ENCODE measurements at regions of chr3 and their contacts with region 1.

Region 1: GRCh38 chr3:5057857-5058324 is 64.2 kb upstream of the ARL8B start:
- DNase-seq: peak; percentile 60
- ATAC-seq: peak; percentile 94
- H3K4me3 ChIP-seq: no peak overlapping the region
- H3K27ac ChIP-seq: no peak overlapping the region
- H3K4me1 ChIP-seq: peaks cover 6% of the 10 kb centered on the region; the same call in 1 of the 2 replicates
- H3K27me3 ChIP-seq: peaks cover 0 to 22% of the 10 kb centered on the region in 2 experiments; a peak in 2 of 5 replicates
- CTCF ChIP-seq: peak; percentile 81
- EP300 ChIP-seq: no peak
- POLR2A ChIP-seq: no peak
- RAD21 ChIP-seq: peak; percentile 77

Region 2: GRCh38 chr3:4656059-4656458 is 401.8 kb before region 1 on chr3:
- CTCF ChIA-PET with region 1: interaction called, 6 read pairs
- POLR2A ChIA-PET with region 1: no interaction called
- in situ Hi-C with region 1: no loop called
- intact Hi-C with region 1: loop called (anchors 1 kb)
- DNase-seq: peak; percentile 30
- ATAC-seq: peak; percentile 97
- H3K4me3 ChIP-seq: no peak overlapping the region
- H3K27ac ChIP-seq: no peak overlapping the region
- H3K4me1 ChIP-seq: no peaks in the 10 kb centered on the region
- H3K27me3 ChIP-seq: no peaks in the 10 kb centered on the region
- CTCF ChIP-seq: peak; percentile 70
- EP300 ChIP-seq: no peak
- POLR2A ChIP-seq: no peak
- RAD21 ChIP-seq: peak; percentile 54

Region 3: DNA sequence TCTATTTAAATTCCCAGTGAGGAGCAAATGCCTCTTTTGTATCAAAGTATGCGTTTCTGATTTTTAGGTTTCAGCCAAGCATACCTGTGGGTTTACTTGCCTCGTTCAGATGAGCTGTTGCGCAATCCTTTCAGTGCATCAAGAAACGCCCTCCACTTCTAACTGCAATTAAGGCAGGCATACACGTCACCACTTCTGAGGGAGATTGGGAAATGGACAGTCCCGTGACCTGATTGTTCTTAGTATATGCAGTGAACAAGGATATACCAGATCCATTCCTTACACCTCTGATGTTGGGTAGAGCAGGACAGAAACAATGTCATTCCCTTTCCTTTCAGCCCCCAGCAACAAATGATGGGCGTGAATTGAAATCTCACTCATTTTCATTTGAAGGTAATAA is 345.7 kb before region 1 on chr3:
- CTCF ChIA-PET with region 1: interaction called, 50 read pairs
- POLR2A ChIA-PET with region 1: no interaction called
- in situ Hi-C with region 1: no loop called
- intact Hi-C with region 1: loop called (anchors 1 kb)
- DNase-seq: no peak
- ATAC-seq: no peak
- H3K4me3 ChIP-seq: no peak overlapping the region
- H3K27ac ChIP-seq: no peak overlapping the region
- H3K4me1 ChIP-seq: no peaks in the 10 kb centered on the region
- H3K27me3 ChIP-seq: no peaks in the 10 kb centered on the region
- CTCF ChIP-seq: no peak
- EP300 ChIP-seq: no peak
- POLR2A ChIP-seq: no peak
- RAD21 ChIP-seq: no peak

Region 4: GRCh38 chr3:4722103-4722502 is 335.8 kb before region 1 on chr3:
- CTCF ChIA-PET with region 1: interaction called, 15 read pairs
- POLR2A ChIA-PET with region 1: interaction called, 3 read pairs
- in situ Hi-C with region 1: loop called (anchors 5 kb)
- intact Hi-C with region 1: no loop called
- DNase-seq: peak; percentile 56
- ATAC-seq: peak; percentile 76
- H3K4me3 ChIP-seq: no peak overlapping the region
- H3K27ac ChIP-seq: no peak overlapping the region
- H3K4me1 ChIP-seq: peaks cover 36% of the 10 kb centered on the region
- H3K27me3 ChIP-seq: no peaks in the 10 kb centered on the region
- CTCF ChIP-seq: peak; percentile 77
- EP300 ChIP-seq: no peak
- POLR2A ChIP-seq: no peak
- RAD21 ChIP-seq: peak; percentile 44; the same call in 1 of the 2 replicates

Measured in HepG2 (cell line).